HepG2 (cell line): ENCODE measurements at regions of chr11 and their contacts with region 1.

Region 1: GRCh38 chr11:119181677-119182412 is 3.4 kb upstream of the NHERF4 start:
- DNase-seq: no peak
- ATAC-seq: no peak
- H3K4me3 ChIP-seq: no peak overlapping the region
- H3K27ac ChIP-seq: no peak overlapping the region
- H3K4me1 ChIP-seq: peaks cover 16% of the 10 kb centered on the region
- H3K27me3 ChIP-seq: no peaks in the 10 kb centered on the region; a peak in 1 of 5 replicates
- CTCF ChIP-seq: no peak
- EP300 ChIP-seq: no peak
- POLR2A ChIP-seq: no peak
- RAD21 ChIP-seq: no peak

Region 2: GRCh38 chr11:118956094-118956846 is 225.6 kb before region 1 on chr11 and contains the start of gene UPK2:
- CTCF ChIA-PET with region 1: no interaction called
- POLR2A ChIA-PET with region 1: no interaction called
- in situ Hi-C with region 1: no loop called
- intact Hi-C with region 1: no loop called
- DNase-seq: peak; percentile 64
- ATAC-seq: peak; percentile 97
- H3K4me3 ChIP-seq: no peak within 1 kb of the TSS
- H3K27ac ChIP-seq: no peak within 1 kb of the TSS
- H3K4me1 ChIP-seq: no peaks in the 10 kb centered on the region
- H3K27me3 ChIP-seq: peaks cover 2 to 53% of the 10 kb centered on the region in 2 experiments; a peak in 4 of 5 replicates
- CTCF ChIP-seq: peak; percentile 98
- EP300 ChIP-seq: no peak
- POLR2A ChIP-seq: no peak
- RAD21 ChIP-seq: peak; percentile 97
- total RNA-seq, gene UPK2: not detected in 2 replicates

Region 3: GRCh38 chr11:119157063-119157462 is 24.8 kb before region 1 on chr11:
- CTCF ChIA-PET with region 1: no interaction called
- POLR2A ChIA-PET with region 1: no interaction called
- in situ Hi-C with region 1: no loop called
- intact Hi-C with region 1: no loop called
- DNase-seq: peak; percentile 33
- ATAC-seq: peak; percentile 14; the same call in 1 of the 3 replicates
- H3K4me3 ChIP-seq: no peak overlapping the region
- H3K27ac ChIP-seq: no peak overlapping the region
- H3K4me1 ChIP-seq: 0 out of 2 replicates have a peak, but pooled peaks cover 4% of the 10 kb centered on the region
- H3K27me3 ChIP-seq: peaks cover 20 to 70% of the 10 kb centered on the region in 2 experiments
- CTCF ChIP-seq: no peak
- EP300 ChIP-seq: no peak
- POLR2A ChIP-seq: no peak
- RAD21 ChIP-seq: no peak

Region 4: GRCh38 chr11:119196833-119197483 is 15.1 kb after region 1 on chr11:
- CTCF ChIA-PET with region 1: no interaction called
- POLR2A ChIA-PET with region 1: no interaction called
- in situ Hi-C with region 1: no loop called
- intact Hi-C with region 1: loop called (anchors 1 kb)
- DNase-seq: peak; percentile 83
- ATAC-seq: peak; percentile 82
- H3K4me3 ChIP-seq: no peak overlapping the region
- H3K27ac ChIP-seq: no peak overlapping the region
- H3K4me1 ChIP-seq: peaks cover 34% of the 10 kb centered on the region
- H3K27me3 ChIP-seq: peaks cover 3 to 8% of the 10 kb centered on the region in 2 experiments; a peak in 2 of 5 replicates
- CTCF ChIP-seq: peak; percentile 86
- EP300 ChIP-seq: no peak
- POLR2A ChIP-seq: no peak
- RAD21 ChIP-seq: peak; percentile 78